ENCODE measurements at regions of chr1 and their contacts with region 1.

Region 1: GRCh38 chr1:176559878-176560277 is 96.9 kb downstream of the PAPPA2 start:
- DNase-seq: peak; percentile 57
- CTCF ChIP-seq: peak; percentile 72

Region 2: GRCh38 chr1:176575991-176576390 is 16.1 kb after region 1 on chr1:
- CTCF ChIA-PET with region 1: interaction called, 11 read pairs
- POLR2A ChIA-PET with region 1: no interaction called
- DNase-seq: no peak
- CTCF ChIP-seq: no peak

Region 3: DNA sequence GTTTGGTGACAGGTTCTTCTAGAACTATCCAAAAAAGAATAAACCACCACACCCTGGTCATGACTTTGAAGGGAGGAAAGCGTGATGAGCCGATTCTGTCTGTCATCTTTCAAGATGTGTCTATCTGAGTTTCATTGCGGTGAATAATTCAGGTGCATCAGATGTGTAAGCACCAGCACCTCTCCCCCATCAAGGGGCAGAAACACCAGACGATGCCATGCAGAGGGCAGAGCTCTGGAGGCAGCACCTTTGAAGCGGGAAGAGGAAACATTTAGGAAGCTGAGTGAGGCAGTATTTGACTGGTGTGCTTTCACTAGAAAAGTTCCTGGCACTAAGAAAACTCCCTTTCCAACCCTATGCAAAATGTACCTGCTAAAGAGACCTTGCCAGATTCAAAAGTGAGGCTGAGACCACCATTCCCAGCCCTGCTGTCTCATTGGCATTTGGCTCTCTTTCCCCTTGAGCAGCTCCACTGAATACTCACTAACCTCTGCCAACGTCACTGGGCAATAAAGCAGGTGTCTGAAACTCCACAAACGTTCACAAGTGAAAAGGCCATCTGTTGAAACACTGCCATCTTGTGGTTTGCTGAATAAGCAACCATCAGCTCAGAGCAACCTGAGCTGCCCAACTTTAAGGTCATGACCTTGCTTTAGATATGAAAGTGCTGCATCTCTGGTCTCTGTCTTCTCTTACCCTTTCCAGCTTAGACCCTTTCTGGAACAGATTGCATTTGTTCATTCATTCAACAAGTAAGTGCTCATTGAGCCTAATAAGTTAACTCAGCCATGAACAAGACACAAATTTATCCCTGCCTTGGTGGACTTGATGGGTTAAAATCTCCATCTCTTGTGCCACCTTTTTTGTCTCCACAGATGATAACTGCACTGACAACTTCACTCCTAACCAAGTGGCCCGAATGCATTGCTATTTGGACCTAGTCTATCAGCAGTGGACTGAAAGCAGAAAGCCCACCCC is 131.7 kb after region 1 on chr1:
- CTCF ChIA-PET with region 1: interaction called, 42 read pairs
- POLR2A ChIA-PET with region 1: no interaction called
- DNase-seq: peak; percentile 40
- CTCF ChIP-seq: peak; percentile 56

Region 4: DNA sequence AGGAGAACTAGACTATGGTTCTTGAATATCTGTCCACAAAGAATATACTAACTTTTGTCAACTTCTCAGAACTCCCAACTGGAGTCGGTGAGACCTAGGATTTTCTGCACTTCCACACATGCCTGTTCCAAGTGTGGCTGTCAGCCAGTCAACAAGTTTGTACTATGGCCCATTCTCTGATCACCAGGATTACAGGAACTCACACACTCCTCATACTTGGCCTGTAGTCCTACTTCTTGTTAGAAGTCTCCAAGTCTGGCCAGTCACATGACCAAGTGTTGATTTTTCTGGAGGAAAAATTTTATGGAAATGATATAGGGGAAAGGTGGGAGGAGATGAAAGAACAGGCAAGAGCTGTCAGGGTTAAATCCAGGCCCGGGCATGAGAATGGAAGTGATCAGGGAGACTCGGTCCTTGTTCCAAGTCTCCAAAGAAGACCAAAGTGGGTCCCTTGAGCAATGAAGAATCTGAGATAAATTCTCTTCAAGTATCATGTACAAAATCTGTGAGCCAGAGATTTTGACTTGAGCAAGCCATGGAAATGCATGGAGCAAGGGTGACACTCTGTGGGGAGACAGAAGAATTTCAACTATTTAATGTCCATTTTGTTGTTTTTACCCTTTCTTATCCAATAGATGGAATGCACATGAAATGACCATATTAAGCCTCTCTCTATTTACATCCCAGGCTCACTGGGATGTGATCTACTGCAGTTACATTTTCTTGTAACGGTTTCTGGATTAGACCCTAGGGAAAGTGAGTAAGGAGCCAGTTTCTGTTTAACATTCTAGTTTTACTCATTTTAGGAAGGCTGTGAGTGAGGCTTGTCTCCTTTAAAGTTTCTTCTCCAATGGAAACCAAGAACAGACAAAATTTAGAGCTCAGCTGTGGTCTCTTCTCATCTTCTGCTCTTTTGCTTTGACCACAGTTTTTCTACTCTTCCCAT is 283.7 kb after region 1 on chr1:
- CTCF ChIA-PET with region 1: interaction called, 35 read pairs
- POLR2A ChIA-PET with region 1: no interaction called
- DNase-seq: no peak
- CTCF ChIP-seq: peak; percentile 35

Region 5: DNA sequence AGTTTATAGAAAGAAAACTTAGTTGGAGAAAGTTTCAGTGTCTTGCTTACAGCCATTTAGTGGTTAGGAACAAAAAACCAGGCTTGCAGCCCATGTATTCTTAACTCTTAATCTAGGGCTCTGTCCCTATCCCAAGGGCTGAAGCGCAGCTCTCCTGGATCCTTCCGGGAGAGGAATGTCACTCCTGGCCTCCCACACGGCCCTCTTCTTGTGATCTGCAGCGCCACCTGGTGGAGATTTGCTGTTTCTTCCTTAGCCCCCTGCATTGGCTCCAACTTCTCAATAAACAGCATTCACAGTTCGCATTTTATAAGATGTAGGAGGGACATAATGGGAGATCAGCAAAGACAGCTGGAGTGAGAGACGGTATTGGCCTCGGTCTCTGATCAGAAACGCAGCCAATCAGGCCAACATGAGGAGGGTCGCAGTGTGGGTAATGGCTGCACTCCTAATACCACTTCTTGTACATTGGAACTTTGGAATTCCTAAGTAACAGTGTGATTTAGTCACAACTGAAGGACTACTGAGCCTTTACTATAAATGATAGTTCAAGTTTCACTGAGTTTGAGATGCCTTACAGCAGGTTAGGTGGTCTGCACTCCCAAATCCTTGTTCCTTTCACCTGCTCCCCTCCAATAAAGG is 321.2 kb after region 1 on chr1:
- CTCF ChIA-PET with region 1: interaction called, 17 read pairs
- POLR2A ChIA-PET with region 1: no interaction called
- DNase-seq: peak; percentile 63
- CTCF ChIP-seq: peak; percentile 80